ENCODE measurements at regions of chr7 and their contacts with region 1.

Region 1: DNA sequence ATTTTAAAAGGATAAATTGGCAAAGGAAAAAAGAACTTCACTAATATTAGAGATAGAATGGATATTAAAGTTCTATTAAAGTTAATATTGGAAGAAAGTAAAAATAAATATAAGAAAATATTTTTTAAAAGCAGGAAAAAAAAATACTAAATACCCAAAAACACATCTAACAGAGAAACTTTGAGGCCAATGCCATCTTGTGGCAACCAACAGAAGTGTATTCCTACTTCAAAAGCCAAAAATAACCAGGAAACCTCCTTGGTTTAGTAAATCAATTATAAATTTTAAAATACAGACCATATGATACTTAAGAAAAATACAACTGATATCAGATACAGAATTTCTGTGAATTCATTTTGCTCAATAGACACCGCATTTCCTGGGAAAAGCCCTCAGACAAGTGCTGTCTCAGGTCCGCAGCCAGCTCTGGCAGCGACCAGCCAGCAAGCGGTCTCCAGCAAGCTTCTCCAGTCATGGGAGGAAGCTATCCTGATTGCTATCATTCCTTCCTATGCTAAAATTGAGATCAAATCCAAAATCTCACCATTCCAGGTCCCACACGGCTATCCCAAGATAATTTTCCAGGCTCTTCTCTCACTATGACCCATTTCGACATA is 65.3 kb downstream of the LMBR1 start:
- DNase-seq: no peak
- H3K4me3 Mint-ChIP-seq: no peak overlapping the region
- H3K27ac Mint-ChIP-seq: no peak overlapping the region
- H3K4me1 Mint-ChIP-seq: no peaks in the 10 kb centered on the region
- H3K27me3 Mint-ChIP-seq: no peaks in the 10 kb centered on the region

Region 2: GRCh38 chr7:156473476-156474240 is 354.0 kb before region 1 on chr7:
- intact Hi-C with region 1: loop called (anchors 10 kb)
- DNase-seq: peak; percentile 78
- H3K4me3 Mint-ChIP-seq: no peak overlapping the region
- H3K27ac Mint-ChIP-seq: no peak overlapping the region
- H3K4me1 Mint-ChIP-seq: no peaks in the 10 kb centered on the region
- H3K27me3 Mint-ChIP-seq: peaks cover 15% of the 10 kb centered on the region

Region 3: DNA sequence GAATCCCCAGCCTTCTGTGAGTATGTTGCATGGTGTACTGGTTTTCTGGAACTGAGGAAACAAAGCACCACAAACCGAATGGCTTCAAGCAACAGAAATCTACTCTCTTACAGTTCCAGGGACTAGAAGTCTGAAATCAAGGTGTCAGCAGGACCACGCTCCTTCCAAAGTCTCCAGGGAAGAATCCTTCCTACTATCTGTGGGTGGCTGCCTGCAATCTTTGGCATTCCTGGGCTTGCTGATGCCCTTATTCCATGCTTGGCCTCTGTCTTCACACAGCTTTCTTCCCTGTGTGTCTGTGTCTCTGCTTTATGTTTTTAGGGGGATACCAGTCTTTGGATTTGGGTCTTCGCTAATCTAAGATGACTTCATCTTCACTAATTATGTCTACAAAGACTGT is 16.0 kb before region 1 on chr7:
- intact Hi-C with region 1: no loop called
- DNase-seq: no peak
- H3K4me3 Mint-ChIP-seq: no peak overlapping the region
- H3K27ac Mint-ChIP-seq: no peak overlapping the region
- H3K4me1 Mint-ChIP-seq: peaks cover 4% of the 10 kb centered on the region
- H3K27me3 Mint-ChIP-seq: no peaks in the 10 kb centered on the region

Measured in activated CD4-positive, alpha-beta T cell treated with anti-CD3 and anti-CD28 coated beads, Interleukin-2, amount 10 ng/mL, durations not matched to agents 24 days and 14 days (primary cell).